Heart right ventricle (tissue), 16 donors: ENCODE measurements at regions of chr2 and their contacts with region 1.

Region 1: DNA sequence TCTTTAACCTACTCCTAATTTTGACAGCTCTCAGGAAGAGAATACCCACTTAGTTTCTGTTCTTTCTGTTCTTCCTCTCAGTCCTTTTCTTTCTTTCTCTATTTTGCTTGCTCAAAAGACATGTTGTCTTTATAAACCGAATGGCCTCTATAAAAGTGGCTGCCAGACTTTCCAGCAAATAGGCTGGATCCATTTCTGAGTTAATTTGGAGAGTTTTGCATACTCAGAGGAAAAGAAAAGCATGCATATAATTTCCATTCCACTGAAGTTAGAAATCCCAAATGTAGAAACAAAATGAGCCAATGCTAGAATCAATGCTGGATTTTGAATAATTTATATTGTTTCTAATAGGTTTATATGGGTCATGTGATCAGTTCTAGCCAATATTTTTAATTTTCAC is 65.9 kb downstream of the FAM124B start:
- DNase-seq: no peak
- ATAC-seq: no peak
- H3K4me3 ChIP-seq: no peak overlapping the region
- H3K27ac ChIP-seq: no peak overlapping the region
- H3K4me1 ChIP-seq: no peaks in the 10 kb centered on the region
- H3K27me3 ChIP-seq: no peaks in the 10 kb centered on the region
- CTCF ChIP-seq: no peak

Region 2: GRCh38 chr2:222860740-222861410 is 1475.1 kb before region 1 on chr2 and contains the start of gene ACSL3:
- intact Hi-C with region 1: no loop called
- DNase-seq: peak; percentile 97 to 98
- ATAC-seq: peak; percentile 96 to 99 (median 97)
- H3K4me3 ChIP-seq: peak within 1 kb of the TSS; percentile 76 to 100 (median 90)
- H3K27ac ChIP-seq: peak within 1 kb of the TSS; percentile 95 to 99 (median 98)
- H3K4me1 ChIP-seq: peaks cover 16 to 57% (median 54%) of the 10 kb centered on the region in 9 donors
- H3K27me3 ChIP-seq: no peaks in the 10 kb centered on the region
- CTCF ChIP-seq: peak in 4 of 9 donors; percentile 8 to 32 (median 18)
- total RNA-seq, gene ACSL3: 37.9 to 67.2 (median 54.8) TPM

Region 3: DNA sequence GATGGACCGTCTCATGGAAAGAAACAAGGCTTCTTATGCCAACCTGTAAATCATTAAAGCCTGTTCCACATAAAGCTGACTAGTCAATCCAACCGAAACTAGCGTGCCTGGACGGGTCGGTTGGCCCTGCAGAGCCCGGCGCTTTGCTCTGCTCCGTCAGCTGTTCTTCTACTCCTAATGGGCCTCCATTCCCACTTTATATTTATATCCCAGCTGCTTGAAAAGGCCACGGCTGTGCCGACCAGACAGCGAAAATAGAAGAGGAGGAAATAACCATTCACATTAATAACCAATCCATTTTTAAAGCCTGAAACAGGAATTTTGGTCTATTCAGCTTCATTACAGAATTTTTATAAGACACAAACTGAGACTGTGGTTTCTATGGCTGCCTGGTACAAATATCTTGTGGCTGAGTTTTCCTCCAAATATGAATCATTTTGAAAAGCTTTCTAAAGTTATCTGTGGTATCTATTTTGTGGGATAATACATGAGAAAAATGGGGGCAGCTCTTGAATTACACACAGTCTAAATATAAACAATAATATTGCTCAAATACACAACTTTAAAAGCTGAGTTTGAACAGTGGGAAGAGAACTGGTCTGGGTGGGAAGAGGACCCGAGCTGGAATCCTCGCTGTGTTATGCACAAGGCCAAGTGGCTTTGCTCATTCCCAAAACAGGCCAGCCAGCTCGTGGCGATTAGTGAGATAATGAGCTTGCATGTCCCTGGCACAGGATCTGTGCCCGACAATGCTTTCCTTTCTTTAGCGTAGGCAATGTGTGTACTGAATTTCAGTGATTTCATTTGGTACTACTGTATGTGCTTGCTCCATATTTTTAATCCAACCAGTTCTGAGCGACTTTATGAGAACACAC is 76.4 kb after region 1 on chr2:
- intact Hi-C with region 1: no loop called
- DNase-seq: no peak
- ATAC-seq: no peak
- H3K4me3 ChIP-seq: no peak overlapping the region
- H3K27ac ChIP-seq: no peak overlapping the region
- H3K4me1 ChIP-seq: peaks cover 0 to 10% (median 5%) of the 10 kb centered on the region in 9 donors
- H3K27me3 ChIP-seq: no peaks in the 10 kb centered on the region
- CTCF ChIP-seq: no peak

Region 4: GRCh38 chr2:224694502-224694901 is 358.5 kb after region 1 on chr2:
- intact Hi-C with region 1: no loop called
- DNase-seq: no peak
- ATAC-seq: no peak
- H3K4me3 ChIP-seq: no peak overlapping the region
- H3K27ac ChIP-seq: no peak overlapping the region
- H3K4me1 ChIP-seq: no peaks in the 10 kb centered on the region
- H3K27me3 ChIP-seq: no peaks in the 10 kb centered on the region
- CTCF ChIP-seq: no peak

Region 5: DNA sequence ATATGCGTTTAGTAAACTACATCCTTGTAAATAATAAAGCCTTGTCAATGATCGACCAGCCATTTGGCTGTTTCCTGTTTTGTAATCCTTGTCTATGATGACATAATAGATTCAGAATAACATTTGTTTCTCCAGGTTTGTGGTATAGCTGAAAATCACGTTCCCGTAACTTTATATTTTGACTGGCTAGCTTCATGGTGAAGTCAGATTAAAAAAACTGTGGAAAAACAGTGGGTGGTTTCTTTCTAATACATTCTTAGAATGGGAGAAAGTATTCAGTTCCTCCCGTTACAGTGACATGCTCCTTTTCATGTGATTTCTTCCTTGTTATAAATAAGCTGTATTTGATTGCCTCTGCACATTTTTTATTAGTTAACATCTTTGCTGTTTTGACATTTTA is 1430.4 kb after region 1 on chr2:
- intact Hi-C with region 1: loop called in 1 of 10 experiments (anchors 5 kb)
- DNase-seq: no peak
- ATAC-seq: no peak
- H3K4me3 ChIP-seq: no peak overlapping the region
- H3K27ac ChIP-seq: no peak overlapping the region
- H3K4me1 ChIP-seq: no peaks in the 10 kb centered on the region
- H3K27me3 ChIP-seq: no peaks in the 10 kb centered on the region
- CTCF ChIP-seq: no peak